AG04449 (cell line): ENCODE measurements at regions of chr19 and their contacts with region 1.

Region 1: GRCh38 chr19:42596391-42597072 is 1.8 kb upstream of the CEACAM8 start:
- DNase-seq: no peak
- H3K4me3 ChIP-seq: no peak overlapping the region
- CTCF ChIP-seq: peak; percentile 86

Region 2: GRCh38 chr19:42313096-42313839 is 283.3 kb before region 1 on chr19 and contains the start of gene TMEM145:
- CTCF ChIA-PET with region 1: no interaction called
- POLR2A ChIA-PET with region 1: no interaction called
- DNase-seq: no peak
- H3K4me3 ChIP-seq: peak within 1 kb of the TSS; percentile 47
- CTCF ChIP-seq: no peak

Region 3: DNA sequence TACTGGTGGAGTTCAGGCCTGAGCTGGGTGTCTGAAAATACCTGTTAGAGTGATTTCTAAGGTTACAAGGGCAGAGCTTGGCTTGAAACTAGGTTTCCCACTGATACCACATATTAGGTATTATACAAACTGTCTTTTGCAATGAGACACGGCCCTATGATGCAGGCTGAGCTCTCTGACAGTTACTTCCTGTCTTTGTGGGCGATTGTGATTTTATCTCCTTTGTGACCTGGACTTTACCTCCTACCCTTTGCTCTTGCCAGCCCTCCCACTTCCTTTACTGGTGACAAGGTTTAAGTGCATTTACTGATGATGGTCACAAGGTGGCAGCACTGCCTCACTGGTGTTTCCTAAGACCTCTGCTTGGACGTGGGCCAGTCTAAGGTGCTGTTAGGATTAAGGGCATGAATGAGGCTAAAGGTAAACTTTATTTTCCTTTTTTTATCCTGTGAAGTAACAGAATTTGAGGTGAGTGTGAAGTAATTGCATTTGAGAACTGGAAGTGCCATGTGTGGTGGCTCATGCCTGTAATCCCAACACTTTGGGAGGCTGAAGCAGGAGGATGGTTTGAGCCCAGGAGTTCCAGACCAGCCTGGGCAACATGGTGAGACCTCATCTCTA is 146.1 kb before region 1 on chr19:
- CTCF ChIA-PET with region 1: interaction called, 28 read pairs
- POLR2A ChIA-PET with region 1: no interaction called
- DNase-seq: peak; percentile 19
- H3K4me3 ChIP-seq: no peak overlapping the region
- CTCF ChIP-seq: peak; percentile 78

Region 4: DNA sequence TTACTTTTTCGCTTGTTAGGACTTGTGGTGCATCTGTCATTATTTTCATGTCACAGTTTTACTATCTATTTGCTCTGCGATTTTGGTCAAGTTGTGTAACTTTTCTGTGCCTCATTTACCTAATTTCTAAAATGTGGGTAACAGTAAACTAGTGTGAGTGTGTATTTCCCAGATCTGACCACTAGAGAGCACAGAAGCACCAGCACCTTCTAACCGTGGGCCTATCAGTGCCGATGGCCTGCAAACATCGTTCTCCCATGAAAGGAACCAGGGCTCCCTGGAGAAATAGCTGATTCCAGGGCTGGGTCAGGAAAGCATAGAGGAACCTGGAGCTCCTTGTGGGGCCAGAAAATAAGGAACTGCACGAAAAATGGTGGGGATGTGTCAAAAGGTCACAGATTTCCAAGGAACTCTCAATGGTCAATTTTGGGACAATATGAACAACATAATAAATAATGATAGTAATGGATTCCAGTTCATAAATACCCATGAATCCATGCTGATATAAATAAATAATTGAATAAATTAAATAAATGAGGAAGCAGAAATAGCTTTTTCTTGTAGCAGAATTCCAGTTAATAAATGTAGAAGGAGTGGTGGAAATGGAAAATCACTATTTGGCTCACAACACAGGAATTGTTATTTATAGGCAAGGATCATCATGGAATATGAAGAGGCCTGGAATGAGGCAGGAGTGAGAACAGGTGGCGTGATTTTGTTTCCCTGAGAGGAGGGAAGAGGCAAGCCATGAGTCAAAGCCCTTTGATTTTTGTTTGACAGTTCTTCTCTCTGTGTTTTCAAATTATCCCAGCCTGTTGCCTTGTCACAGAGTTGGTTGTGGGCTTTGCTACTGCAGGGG is 33.0 kb before region 1 on chr19:
- CTCF ChIA-PET with region 1: interaction called, 34 read pairs
- POLR2A ChIA-PET with region 1: no interaction called
- DNase-seq: no peak
- H3K4me3 ChIP-seq: no peak overlapping the region
- CTCF ChIP-seq: peak; percentile 69

Region 5: DNA sequence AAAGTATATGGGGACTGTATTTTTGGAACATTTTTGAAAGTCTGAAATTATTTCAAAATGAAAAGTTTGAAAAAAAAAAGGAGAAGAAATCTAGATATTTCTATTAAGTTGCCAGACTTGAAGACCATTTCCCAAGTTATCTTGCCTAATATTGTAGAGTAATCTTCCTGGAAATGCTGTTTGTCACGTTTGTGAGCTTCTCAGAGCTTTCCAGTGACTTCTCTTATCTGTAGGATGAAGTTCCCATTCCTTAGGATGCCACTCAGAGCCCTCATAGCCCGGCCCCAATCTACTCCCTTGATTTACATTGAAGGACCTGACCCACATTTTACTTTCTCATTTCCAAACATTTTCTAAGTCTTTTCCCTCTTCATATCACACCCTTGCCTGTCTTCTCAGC is 25.4 kb before region 1 on chr19:
- CTCF ChIA-PET with region 1: interaction called, 11 read pairs
- POLR2A ChIA-PET with region 1: no interaction called
- DNase-seq: no peak
- H3K4me3 ChIP-seq: no peak overlapping the region
- CTCF ChIP-seq: no peak

Region 6: GRCh38 chr19:42584466-42584865 is 12.1 kb before region 1 on chr19:
- CTCF ChIA-PET with region 1: interaction called, 23 read pairs
- POLR2A ChIA-PET with region 1: no interaction called
- DNase-seq: no peak
- H3K4me3 ChIP-seq: no peak overlapping the region
- CTCF ChIP-seq: no peak

Region 7: DNA sequence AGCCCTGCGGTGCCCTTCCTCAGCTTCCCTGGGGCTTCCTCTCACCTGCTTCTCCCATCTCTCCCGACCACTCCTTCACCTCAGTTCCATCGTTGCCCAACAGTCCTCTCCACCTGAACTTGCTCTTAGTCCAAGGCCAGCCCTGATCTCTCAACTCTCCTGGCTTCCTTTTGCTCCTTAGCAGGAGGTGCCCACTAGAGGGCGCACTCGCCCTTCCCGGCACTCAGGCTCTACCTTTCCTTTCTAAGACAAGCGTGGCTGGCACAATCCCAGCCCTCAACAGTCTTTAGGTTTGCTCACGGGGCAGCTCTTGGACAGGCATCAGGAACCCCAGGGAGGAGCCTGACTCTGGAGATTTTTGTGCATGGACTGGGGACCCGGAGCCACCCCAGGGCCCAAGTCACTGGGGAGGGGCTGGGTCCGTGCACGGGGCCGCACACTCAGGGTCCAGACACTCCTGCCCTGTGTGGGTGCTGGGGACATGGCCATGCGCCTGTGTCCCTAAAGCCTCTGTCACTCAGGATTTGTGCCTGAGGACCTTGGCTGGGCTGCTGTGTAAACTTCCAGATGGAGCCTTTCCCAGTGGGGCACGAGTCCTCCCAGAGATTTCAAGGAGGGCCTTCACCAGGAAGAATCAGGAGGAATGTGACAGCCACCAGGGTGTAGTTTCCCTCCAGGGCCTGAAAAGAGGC is 10.3 kb after region 1 on chr19:
- CTCF ChIA-PET with region 1: interaction called, 21 read pairs
- POLR2A ChIA-PET with region 1: no interaction called
- DNase-seq: no peak
- H3K4me3 ChIP-seq: no peak overlapping the region
- CTCF ChIP-seq: peak; percentile 66

Region 8: GRCh38 chr19:42613666-42614065 is 17.1 kb after region 1 on chr19:
- CTCF ChIA-PET with region 1: interaction called, 24 read pairs
- POLR2A ChIA-PET with region 1: no interaction called
- DNase-seq: no peak
- H3K4me3 ChIP-seq: no peak overlapping the region
- CTCF ChIP-seq: no peak